ENCODE measurements at regions of chr5 and their contacts with region 1.

Region 1: DNA sequence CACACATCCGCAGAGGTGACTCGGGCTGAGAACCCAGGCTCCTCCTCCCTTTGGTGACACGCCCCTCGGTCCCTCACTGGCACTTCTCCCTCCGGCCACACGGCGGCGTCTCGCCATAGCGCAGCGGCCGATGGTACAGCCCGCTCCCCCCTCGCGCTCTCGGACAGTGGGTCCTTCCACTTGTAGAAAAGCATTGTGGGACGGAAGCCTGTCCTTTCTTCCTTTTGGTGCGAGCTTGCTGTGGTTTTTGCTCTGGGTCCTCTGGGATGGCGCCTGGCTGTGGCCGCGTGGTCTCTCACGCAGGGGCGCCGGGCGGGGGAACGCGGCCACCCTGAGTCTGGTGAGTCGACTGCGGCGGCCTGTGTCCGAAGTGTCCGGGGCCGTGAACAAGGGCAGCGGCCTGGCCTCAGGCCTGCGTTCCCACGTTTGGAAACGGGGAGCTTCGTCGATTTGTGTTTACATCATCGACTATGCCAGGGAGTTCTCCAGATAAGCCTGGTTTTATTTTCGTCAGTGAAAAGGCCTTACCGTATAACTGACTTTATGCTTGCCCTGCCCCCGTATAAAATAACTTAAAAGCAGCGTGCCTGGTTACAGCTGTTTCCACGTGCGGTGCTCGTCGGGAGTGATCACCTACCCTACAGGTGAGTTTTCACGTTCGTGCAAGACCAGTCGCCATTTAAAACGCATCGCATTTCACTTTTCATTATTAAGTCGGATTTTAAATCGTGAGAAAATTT is 258.3 kb downstream of the EPB41L4A start:
- DNase-seq: peak in 1 of 2 donors; percentile 93
- H3K4me3 ChIP-seq: peak overlapping the region; percentile 73 to 89
- H3K27ac ChIP-seq: peak overlapping the region; percentile 83
- H3K4me1 ChIP-seq: peaks cover 29% of the 10 kb centered on the region
- H3K27me3 ChIP-seq: no peaks in the 10 kb centered on the region
- CTCF ChIP-seq: peak; percentile 72 to 94 (median 79)
- POLR2A ChIP-seq: peak in 1 of 2 donors; percentile 53

Region 2: GRCh38 chr5:110865400-110866094 is 1295.3 kb before region 1 on chr5:
- intact Hi-C with region 1: no loop called
- DNase-seq: no peak
- H3K4me3 ChIP-seq: no peak overlapping the region
- H3K27ac ChIP-seq: no peak overlapping the region
- H3K4me1 ChIP-seq: no peaks in the 10 kb centered on the region
- H3K27me3 ChIP-seq: no peaks in the 10 kb centered on the region
- CTCF ChIP-seq: no peak
- POLR2A ChIP-seq: no peak

Region 3: DNA sequence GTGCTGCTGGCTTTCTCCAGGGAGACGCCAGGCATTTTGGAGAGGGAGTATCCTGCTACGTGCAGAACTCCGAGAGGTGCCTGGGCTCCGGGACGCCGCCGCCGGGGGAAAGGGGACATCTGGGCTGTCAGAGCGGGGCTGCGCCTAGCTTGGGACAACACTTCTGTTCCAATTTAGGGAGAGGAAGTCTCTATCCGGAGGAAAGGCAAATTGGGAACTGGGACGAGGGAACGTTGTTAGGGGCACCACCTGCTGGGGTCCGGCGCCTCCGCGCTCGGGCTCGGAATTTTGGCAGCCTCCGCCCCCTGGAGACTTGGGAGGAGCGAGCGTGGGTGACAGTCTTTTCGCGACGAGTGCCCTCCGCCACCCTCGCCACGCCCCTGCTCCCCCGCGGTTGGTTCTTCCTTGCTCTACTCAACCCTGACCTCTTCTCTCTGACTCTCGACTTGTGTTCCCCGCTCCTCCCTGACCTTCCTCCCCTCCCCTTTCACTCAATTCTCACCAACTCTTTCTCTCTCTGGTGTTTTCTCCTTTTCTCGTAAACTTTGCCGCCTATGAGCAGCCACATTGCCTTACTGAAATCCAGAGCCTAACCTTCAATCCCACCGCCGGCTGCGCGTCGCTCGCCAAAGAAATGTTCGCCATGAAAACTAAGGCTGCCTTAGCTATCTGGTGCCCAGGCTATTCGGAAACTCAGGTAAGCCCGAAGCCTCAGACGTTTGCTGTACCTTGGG is 1087.7 kb before region 1 on chr5:
- intact Hi-C with region 1: no loop called
- DNase-seq: no peak
- H3K4me3 ChIP-seq: peak overlapping the region; percentile 46 to 54
- H3K27ac ChIP-seq: peak overlapping the region; percentile 62
- H3K4me1 ChIP-seq: peaks cover 17% of the 10 kb centered on the region
- H3K27me3 ChIP-seq: no peaks in the 10 kb centered on the region
- CTCF ChIP-seq: no peak
- POLR2A ChIP-seq: no peak

Region 4: DNA sequence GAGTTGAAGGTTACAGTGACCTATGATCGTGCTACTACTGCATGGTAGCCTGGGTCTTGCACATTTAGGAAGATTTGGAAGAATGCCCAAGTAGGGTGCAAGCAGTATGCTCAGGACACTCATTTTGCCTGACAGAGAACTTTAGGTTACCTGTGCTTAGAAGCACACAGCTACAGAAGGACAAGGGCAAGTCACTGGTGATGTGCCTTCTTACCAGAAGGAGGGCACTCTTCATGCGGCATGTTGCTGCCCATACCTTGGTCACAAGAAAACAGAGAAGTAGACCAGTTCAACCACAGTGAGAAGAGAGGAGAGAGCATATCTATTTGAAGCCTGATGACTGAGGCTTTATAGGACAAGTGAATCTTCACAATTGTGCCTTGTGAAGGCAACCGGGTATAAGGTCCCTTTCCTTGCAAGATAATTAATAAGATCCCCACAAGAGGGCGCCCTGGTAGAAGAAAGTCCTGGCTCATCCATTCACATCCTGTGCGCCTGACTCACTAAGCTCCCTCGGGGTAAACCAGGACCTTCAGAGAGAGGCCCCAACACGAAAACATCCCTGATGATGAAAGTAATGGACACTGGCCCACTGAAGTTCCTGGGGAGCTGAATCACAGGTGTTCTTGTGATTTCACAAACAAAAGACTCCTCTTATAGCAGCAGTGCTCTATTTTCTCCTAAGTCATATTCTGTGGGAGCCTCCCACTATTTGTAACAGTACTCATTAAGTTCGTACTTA is 610.4 kb before region 1 on chr5:
- intact Hi-C with region 1: loop called (anchors 5 kb)
- DNase-seq: peak in 1 of 2 donors; percentile 96
- H3K4me3 ChIP-seq: no peak overlapping the region
- H3K27ac ChIP-seq: peak overlapping the region; percentile 51
- H3K4me1 ChIP-seq: no peaks in the 10 kb centered on the region
- H3K27me3 ChIP-seq: no peaks in the 10 kb centered on the region
- CTCF ChIP-seq: peak; percentile 33 to 74 (median 67)
- POLR2A ChIP-seq: no peak

Region 5: GRCh38 chr5:113922343-113922742 is 1761.5 kb after region 1 on chr5:
- intact Hi-C with region 1: no loop called
- DNase-seq: no peak
- H3K4me3 ChIP-seq: no peak overlapping the region
- H3K27ac ChIP-seq: no peak overlapping the region
- H3K4me1 ChIP-seq: no peaks in the 10 kb centered on the region
- H3K27me3 ChIP-seq: no peaks in the 10 kb centered on the region
- CTCF ChIP-seq: no peak
- POLR2A ChIP-seq: no peak